ENCODE measurements at regions of chr7 and their contacts with region 1.

Region 1: DNA sequence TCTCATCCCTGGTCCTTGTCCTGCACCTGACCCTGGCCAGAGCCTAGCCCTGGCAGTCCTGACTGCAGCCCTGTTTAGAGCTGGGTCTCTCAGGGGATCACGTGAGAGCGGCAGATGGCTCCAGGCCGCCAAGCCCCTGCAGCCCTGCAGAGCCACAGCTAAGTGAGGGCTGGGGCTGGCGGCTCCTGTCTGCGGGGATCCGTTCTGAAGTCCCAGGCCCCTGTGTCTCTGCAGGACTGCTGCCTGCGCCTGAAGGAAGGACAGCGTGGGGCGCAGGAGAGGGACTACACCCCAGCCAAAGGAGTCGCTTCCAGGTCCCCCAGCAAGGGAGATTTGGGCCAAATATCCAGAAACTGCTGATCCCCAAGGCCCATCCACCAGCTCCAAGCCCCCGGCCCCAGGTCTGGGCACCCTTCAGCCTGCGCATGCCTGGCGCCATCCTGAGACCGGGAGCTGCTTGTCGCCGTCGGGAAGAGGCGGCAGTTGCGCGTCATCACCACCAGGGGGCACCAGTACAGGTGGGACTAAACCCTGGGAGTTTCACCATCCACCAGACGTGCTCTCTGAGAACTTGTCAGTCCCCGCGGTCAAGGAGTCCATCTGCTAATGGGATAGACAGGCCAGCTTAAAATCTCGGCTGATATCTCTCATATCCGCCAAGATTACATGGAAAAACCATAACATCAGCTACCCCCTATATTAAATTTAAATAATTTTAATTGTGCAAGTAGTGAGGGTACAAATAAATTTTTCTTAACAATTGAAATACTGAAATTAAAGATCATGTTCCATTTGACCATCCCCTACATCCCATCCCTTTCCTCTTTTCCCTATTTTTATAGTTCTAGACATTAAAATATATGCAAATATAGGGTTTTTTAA is 25.1 kb upstream of the GHRHR start:
- DNase-seq: peak; percentile 92
- H3K4me3 ChIP-seq: peak overlapping the region; percentile 33 to 54; a peak in 3 of 4 replicates
- H3K27ac ChIP-seq: peak overlapping the region in 1 of 2 experiments; percentile 67; a peak in 1 of 4 replicates
- H3K4me1 ChIP-seq: peaks cover 0 to 7% of the 10 kb centered on the region in 2 experiments; a peak in 1 of 4 replicates
- H3K27me3 ChIP-seq: no peaks in the 10 kb centered on the region; the same call in 1 of the 2 replicates
- CTCF ChIP-seq: peak; percentile 99
- EP300 ChIP-seq: no peak
- RAD21 ChIP-seq: peak; percentile 76

Region 2: DNA sequence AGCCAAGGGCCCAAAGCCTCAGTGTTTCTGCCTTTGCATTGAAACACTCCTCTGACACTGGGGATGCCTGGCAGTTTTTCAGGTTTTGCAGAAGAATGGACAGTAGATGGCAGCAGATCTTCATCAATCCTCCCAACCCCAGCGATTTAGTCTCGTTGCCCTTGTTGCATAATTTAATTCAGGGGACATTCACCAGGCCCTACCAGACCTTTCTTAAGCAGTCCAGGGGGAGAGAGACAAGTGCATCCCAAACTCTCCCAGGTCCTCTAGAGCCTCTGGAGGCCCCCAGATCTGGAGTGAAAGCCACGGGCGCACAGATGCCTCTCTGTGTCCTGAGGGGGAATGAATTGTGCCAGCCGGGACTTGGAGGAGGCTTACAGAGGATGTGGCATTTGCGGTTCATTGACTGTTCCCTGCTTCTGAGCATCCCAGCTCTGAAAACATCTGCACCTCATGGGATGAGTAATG is 137.9 kb before region 1 on chr7:
- CTCF ChIA-PET with region 1: interaction called, 35 read pairs
- POLR2A ChIA-PET with region 1: no interaction called
- DNase-seq: peak; percentile 89
- H3K4me3 ChIP-seq: no peak overlapping the region
- H3K27ac ChIP-seq: peak overlapping the region in 1 of 2 experiments; percentile 4; a peak in 2 of 4 replicates
- H3K4me1 ChIP-seq: peaks cover 24 to 51% of the 10 kb centered on the region in 2 experiments
- H3K27me3 ChIP-seq: no peaks in the 10 kb centered on the region
- CTCF ChIP-seq: peak; percentile 96
- EP300 ChIP-seq: no peak
- RAD21 ChIP-seq: peak; percentile 100

Region 3: DNA sequence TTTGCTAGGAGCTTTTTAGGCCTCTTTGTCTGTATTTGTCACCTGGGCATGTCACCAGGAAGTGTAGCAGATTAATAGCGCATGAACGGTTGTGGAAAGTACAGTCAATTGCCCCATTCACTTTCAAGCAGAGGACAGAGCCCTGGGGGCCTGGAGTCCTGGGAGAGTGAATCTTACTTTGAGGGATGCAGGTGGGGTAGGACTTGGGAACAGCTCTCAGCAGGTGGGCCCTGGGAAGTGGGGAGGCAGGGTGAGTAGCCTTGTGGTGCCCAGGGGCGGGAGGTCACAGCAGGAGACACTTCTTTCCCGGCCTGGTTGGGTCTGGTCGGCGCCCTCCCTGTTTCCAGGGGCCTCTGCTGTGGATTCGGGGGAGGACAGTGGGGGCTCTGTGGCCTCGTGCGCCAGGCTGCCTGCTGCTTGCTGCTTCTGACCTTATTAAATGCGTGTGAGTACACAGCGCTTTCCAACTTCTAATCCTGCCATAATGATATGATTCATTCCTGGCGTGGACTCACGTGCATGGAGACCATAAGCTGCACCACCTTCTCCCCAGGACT is 78.7 kb before region 1 on chr7:
- CTCF ChIA-PET with region 1: interaction called, 21 read pairs
- POLR2A ChIA-PET with region 1: no interaction called
- DNase-seq: no peak
- H3K4me3 ChIP-seq: no peak overlapping the region
- H3K27ac ChIP-seq: no peak overlapping the region; a peak in 1 of 4 replicates
- H3K4me1 ChIP-seq: peaks cover 0 to 53% of the 10 kb centered on the region in 2 experiments; a peak in 2 of 4 replicates
- H3K27me3 ChIP-seq: no peaks in the 10 kb centered on the region
- CTCF ChIP-seq: no peak
- EP300 ChIP-seq: no peak
- RAD21 ChIP-seq: no peak

Region 4: GRCh38 chr7:30911561-30911969 is 27.1 kb before region 1 on chr7 and contains the start of gene AQP1:
- CTCF ChIA-PET with region 1: interaction called, 84 read pairs
- POLR2A ChIA-PET with region 1: no interaction called
- DNase-seq: peak; percentile 67
- H3K4me3 ChIP-seq: no peak within 1 kb of the TSS; a peak in 1 of 4 replicates
- H3K27ac ChIP-seq: peak within 1 kb of the TSS in 1 of 2 experiments; percentile 86; a peak in 2 of 4 replicates
- H3K4me1 ChIP-seq: peaks cover 13 to 79% of the 10 kb centered on the region in 2 experiments; a peak in 3 of 4 replicates
- H3K27me3 ChIP-seq: no peaks in the 10 kb centered on the region
- CTCF ChIP-seq: no peak
- EP300 ChIP-seq: no peak
- RAD21 ChIP-seq: no peak
- polyA plus RNA-seq, gene AQP1: 1.7 and 2.4 TPM in 2 replicates

Region 5: DNA sequence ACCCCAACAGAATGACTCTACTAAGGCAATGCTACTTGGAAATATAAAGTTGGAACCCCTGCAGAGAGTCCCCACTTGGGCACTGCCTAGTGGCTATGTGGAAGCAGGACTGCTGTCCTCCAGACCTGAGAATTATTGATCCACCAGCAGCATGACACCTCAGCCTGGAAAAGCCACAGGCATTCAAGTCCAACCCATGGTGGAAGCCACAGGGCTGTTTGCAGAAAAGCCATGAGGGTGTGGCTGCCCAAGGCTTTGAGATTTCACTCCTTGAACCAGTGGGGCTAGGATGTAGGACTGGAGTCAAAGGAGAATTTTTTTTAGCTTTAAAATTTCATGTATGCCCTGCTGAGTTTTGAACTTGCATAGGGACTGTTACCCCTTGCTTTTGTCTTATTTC is 11.5 kb after region 1 on chr7:
- CTCF ChIA-PET with region 1: interaction called, 78 read pairs
- POLR2A ChIA-PET with region 1: no interaction called
- DNase-seq: no peak
- H3K4me3 ChIP-seq: no peak overlapping the region
- H3K27ac ChIP-seq: no peak overlapping the region
- H3K4me1 ChIP-seq: no peaks in the 10 kb centered on the region
- H3K27me3 ChIP-seq: peaks cover 32% of the 10 kb centered on the region
- CTCF ChIP-seq: no peak
- EP300 ChIP-seq: no peak
- RAD21 ChIP-seq: no peak

Region 6: DNA sequence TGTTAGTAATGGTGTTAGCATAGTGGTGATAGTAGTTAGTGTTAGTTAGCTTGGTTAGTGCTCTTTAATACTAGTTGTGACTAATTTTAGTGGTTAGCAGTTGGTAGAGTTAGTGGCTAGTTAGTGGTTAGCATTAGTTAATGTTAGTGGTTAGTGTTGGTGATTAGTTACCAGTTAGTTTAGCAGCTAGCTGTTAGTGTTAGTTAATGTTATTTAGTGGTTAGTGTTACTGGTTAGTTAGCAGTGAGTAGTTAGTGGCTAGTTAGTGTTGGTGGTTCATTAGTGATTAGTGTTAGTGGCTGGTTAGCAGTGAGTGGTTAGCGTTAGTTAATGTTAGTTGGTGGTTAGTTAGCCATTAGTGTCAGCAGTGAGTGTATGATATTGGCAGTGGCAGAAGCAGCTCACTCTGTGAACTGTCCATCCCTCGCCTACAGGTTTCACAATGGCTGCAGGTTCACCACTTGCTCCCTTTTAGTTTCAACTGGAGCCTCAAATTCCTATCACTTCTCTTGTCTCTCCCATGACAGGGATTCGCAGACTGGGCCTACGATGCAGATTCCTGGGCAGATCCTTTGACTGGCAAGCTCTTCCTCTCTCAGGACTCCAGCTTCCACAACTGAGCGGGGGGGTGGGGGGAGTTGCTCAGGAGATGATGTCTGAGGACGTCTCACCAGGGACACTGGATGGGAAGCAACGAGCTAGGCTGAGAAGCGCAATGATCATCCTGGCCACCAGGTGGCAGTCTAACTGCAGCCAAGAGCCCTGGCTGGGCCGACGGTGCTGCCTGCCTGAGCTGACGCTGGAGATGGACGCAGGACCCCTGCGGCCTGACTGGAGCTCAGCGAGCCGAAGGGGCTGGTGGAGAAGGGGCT is 44.6 kb after region 1 on chr7:
- CTCF ChIA-PET with region 1: interaction called, 66 read pairs
- POLR2A ChIA-PET with region 1: no interaction called
- DNase-seq: peak; percentile 94
- H3K4me3 ChIP-seq: peak overlapping the region in 1 of 2 experiments; percentile 8; a peak in 1 of 4 replicates
- H3K27ac ChIP-seq: no peak overlapping the region
- H3K4me1 ChIP-seq: peaks cover 0 to 7% of the 10 kb centered on the region in 2 experiments; a peak in 1 of 4 replicates
- H3K27me3 ChIP-seq: peaks cover 20% of the 10 kb centered on the region; the same call in 1 of the 2 replicates
- CTCF ChIP-seq: peak; percentile 97
- EP300 ChIP-seq: no peak
- RAD21 ChIP-seq: peak; percentile 100

Region 7: DNA sequence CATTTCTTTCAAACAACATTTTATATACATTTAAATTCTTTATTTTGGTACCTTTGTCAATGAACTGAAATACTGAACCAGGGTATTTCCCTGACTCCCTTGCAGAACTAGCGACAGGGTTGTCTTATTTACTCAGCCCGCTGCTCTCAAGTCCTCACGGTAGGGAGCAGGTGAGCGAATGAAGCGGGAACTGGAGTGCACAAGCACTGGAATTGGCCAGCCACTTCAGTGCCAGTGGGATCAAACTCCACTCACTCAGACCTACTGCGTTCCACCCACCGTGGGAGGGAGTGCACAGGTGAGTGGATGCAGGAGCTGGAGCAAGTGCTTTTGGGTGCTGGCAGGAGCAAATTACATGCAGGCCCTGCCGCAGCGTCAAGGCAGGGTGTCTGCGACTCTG is 429.9 kb after region 1 on chr7:
- CTCF ChIA-PET with region 1: no interaction called
- POLR2A ChIA-PET with region 1: no interaction called
- DNase-seq: no peak
- H3K4me3 ChIP-seq: no peak overlapping the region
- H3K27ac ChIP-seq: no peak overlapping the region
- H3K4me1 ChIP-seq: no peaks in the 10 kb centered on the region; a peak in 1 of 4 replicates
- H3K27me3 ChIP-seq: peaks cover 53% of the 10 kb centered on the region
- CTCF ChIP-seq: no peak
- EP300 ChIP-seq: no peak
- RAD21 ChIP-seq: no peak